ENCODE measurements at regions of chr21 and their contacts with region 1.

Region 1: GRCh38 chr21:29441651-29442050 is 142.9 kb downstream of the BACH1 start:
- DNase-seq: no peak
- ATAC-seq: no peak
- H3K4me3 ChIP-seq: no peak overlapping the region
- H3K27ac ChIP-seq: no peak overlapping the region
- H3K4me1 ChIP-seq: peaks cover 0 to 7% (median 0%) of the 10 kb centered on the region in 12 donors
- H3K27me3 ChIP-seq: no peaks in the 10 kb centered on the region
- CTCF ChIP-seq: no peak
- POLR2A ChIP-seq: no peak

Region 2: DNA sequence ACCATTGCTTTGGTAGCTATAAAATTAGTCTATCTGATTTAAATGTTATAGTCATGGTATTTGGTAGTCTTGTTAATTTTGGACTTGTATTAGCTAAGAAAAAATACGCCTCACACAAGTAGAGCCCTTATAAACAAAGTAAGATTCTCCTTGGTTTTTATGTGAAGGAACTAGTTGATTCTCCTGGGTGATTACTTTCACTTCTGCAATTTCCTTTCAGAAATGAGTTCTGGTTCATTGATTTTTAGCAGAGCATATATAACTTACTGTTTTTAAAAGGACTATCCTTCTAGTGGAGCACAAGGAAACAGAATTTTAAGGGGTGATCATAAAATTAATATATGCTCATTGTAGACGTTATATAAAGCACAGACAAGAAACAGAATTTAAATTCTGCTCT is 22.8 kb before region 1 on chr21:
- intact Hi-C with region 1: loop called in 1 of 10 experiments (anchors 2 kb)
- DNase-seq: no peak
- ATAC-seq: no peak
- H3K4me3 ChIP-seq: no peak overlapping the region
- H3K27ac ChIP-seq: no peak overlapping the region
- H3K4me1 ChIP-seq: no peaks in the 10 kb centered on the region
- H3K27me3 ChIP-seq: no peaks in the 10 kb centered on the region
- CTCF ChIP-seq: no peak
- POLR2A ChIP-seq: no peak

Measured in heart left ventricle (tissue), 16 donors.